Motor neuron (in vitro differentiated cells): ENCODE measurements at regions of chr5 and their contacts with region 1.

Region 1: GRCh38 chr5:142133330-142134206 is 25.0 kb downstream of the NDFIP1 start:
- ATAC-seq: peak in 2 of 8 experiments; percentile 18 to 49
- H3K4me3 ChIP-seq: no peak overlapping the region
- H3K27ac ChIP-seq: no peak overlapping the region
- H3K4me1 ChIP-seq: peaks cover 0 to 3% of the 10 kb centered on the region in 2 donors

Region 2: DNA sequence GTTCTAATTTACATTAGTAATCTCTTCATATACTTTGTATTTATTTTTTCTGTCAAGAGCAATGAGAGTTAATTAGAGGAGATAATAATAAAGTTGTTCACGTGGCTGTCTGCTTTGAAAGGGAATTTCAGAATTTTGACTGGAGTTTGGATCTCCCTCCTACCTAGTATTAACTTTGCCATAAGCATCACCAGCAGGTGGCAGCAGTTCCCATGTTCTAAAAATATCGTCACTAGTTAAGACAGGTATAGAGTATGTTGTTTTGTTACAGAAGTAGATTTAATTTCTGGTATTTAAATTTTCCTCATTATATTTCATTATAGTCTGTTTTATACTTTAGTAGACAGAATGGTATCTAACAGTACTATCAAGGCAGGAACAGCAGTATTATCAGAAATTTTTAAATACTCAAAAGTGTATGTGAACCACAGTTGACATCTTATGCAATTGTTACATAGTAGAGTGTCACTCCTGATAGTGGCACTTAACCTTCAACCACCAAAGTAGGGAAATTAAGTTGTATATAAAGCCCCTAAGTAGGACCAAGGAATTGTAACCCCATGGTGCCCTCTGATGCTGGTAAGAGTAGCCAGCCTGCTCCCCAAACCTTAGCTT is 141.1 kb before region 1 on chr5:
- in situ Hi-C with region 1: loop called in 1 of 9 experiments (anchors 10 kb)
- ATAC-seq: peak; percentile 39 to 85 (median 66)
- H3K4me3 ChIP-seq: no peak overlapping the region
- H3K27ac ChIP-seq: no peak overlapping the region
- H3K4me1 ChIP-seq: no peaks in the 10 kb centered on the region

Region 3: GRCh38 chr5:142000703-142001484 is 132.7 kb before region 1 on chr5:
- in situ Hi-C with region 1: loop called in 4 of 9 experiments (anchors 10 to 25 kb)
- ATAC-seq: peak in 3 of 8 experiments; percentile 70 to 76 (median 74)
- H3K4me3 ChIP-seq: no peak overlapping the region
- H3K27ac ChIP-seq: no peak overlapping the region
- H3K4me1 ChIP-seq: no peaks in the 10 kb centered on the region

Region 4: GRCh38 chr5:142012792-142013388 is 120.7 kb before region 1 on chr5 and contains the start of gene GNPDA1:
- in situ Hi-C with region 1: loop called in 4 of 9 experiments (anchors 10 to 25 kb)
- ATAC-seq: peak; percentile 74 to 97 (median 96)
- H3K4me3 ChIP-seq: peak within 1 kb of the TSS; percentile 45 to 69 (median 55)
- H3K27ac ChIP-seq: peak within 1 kb of the TSS; percentile 66 to 81
- H3K4me1 ChIP-seq: peaks cover 8 to 10% of the 10 kb centered on the region in 2 donors
- total RNA-seq, gene GNPDA1: 26.6 to 93.3 (median 35.9) TPM